Activated CD4-positive, alpha-beta T cell treated with anti-CD3 and anti-CD28 coated beads, Interleukin-2, amount 10 ng/mL, durations not matched to agents 7 days and 5 days (primary cell): ENCODE measurements at regions of chr3 and their contacts with region 1.

Region 1: GRCh38 chr3:138417559-138417982 is 16.8 kb upstream of the ESYT3 start:
- DNase-seq: peak; percentile 71
- H3K4me3 Mint-ChIP-seq: no peak overlapping the region
- H3K27ac Mint-ChIP-seq: no peak overlapping the region
- H3K4me1 Mint-ChIP-seq: no peaks in the 10 kb centered on the region
- H3K27me3 Mint-ChIP-seq: peaks cover 5% of the 10 kb centered on the region

Region 2: DNA sequence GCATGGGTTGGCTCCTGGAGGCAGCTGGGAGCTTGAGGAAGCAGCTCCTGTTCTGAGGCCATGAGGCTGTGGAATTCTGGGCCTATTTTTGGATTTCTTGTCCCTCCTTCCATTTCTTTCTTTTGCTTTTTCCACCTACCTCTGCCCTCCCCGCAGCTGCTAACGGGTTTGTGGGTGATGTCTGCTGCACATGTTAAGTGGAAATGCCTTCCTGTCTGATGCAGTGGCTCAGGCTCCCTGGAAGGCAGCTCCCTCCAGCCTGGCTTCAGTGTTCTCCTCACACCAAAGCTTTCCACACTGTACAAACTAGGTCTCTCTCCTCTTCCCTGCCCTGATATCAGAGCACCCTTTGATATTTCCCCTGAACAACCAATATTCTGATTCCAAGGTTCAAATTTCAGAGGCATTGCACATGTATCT is 16.9 kb before region 1 on chr3:
- CTCF ChIA-PET with region 1: interaction called, 22 read pairs
- POLR2A ChIA-PET with region 1: no interaction called
- DNase-seq: no peak
- H3K4me3 Mint-ChIP-seq: no peak overlapping the region
- H3K27ac Mint-ChIP-seq: no peak overlapping the region
- H3K4me1 Mint-ChIP-seq: no peaks in the 10 kb centered on the region
- H3K27me3 Mint-ChIP-seq: no peaks in the 10 kb centered on the region